ENCODE measurements at regions of chr11 and their contacts with region 1.

Region 1: DNA sequence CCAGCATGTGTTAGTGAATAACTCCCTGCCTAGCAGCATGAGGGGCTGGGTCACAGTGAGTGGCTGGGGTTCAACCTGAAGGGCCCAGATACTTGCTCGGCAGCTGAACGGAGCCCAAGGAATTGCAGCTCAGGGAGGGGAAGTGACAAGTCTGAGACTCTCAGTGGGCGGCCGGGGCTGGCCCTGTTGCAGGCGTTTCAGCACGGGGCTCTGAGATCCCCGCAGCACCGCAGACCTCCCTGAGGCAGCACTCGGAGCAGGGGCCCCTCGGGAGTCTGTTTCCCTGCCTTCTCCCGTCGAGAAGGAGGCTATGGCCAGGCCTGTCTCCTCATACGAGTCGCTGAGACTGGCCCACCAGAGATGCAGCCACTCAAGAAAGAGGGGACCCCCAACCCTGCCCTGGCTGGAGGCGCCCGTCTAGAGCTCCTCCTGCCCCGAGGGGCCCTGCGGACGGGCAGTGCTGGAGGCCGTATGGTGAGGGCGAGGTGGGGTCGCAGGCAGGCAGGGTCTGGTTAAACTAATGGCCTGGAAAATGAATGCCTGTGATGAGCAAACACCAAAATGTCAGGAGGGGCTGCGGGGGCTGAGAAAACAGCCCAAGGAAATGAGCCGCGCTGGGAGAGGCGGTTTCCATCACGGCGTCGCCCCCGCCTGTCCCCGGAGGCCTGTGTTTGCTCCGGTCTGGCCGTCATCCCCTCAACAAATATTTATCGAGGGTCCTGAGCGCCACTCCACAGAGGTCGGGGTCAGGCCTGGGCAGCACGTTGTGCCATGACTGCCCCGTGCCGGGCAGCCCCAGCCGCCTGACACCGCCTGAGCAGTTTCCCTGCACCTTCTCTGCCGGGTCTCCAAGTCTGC is 9.3 kb downstream of the TSSC4 start:
- DNase-seq: no peak
- H3K4me3 ChIP-seq: no peak overlapping the region
- H3K27ac ChIP-seq: no peak overlapping the region
- H3K4me1 ChIP-seq: no peaks in the 10 kb centered on the region
- H3K27me3 ChIP-seq: peaks cover 0 to 37% of the 10 kb centered on the region in 2 donors
- CTCF ChIP-seq: no peak

Region 2: DNA sequence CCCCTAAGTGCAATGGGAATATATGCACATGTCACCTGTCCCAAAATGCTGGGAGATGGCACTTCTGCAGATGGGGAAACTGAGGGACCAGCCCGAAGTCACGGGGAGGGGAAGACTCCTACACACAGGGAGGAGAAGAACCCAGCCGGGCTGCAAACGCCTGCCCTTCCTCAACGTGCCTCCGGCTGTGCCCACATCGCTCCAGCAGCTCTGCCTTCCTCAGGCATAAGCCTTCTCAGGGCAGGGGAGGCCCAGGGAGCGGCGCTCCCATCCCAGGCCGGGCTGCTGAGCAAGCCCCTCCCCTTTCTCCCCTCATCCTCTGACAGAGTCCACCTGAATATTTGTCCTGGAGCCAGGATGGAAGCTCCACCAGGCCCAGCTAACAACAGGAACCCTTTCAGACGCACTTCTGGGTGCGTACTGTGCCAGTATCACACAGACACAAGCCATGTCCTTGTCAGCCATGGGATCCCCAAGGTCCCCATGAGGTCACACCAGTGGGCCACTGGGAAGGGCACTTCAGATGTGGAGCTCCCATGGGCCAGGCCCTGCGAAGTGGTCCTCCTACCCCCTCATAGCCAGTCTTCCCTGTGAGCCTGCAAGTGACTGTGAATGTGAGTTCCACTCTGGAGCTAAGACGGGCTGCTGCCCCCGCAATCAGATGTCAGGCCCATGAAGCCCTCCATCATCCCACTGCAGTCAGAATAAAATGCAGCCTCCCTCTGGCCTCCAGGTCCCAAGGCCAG is 35.2 kb before region 1 on chr11:
- intact Hi-C with region 1: loop called (anchors 5 kb)
- DNase-seq: no peak
- H3K4me3 ChIP-seq: no peak overlapping the region
- H3K27ac ChIP-seq: no peak overlapping the region
- H3K4me1 ChIP-seq: peaks cover 0 to 24% (median 17%) of the 10 kb centered on the region in 4 donors
- H3K27me3 ChIP-seq: no peaks in the 10 kb centered on the region
- CTCF ChIP-seq: no peak